CD8-positive, alpha-beta T cell (primary cell): ENCODE measurements at regions of chr6 and their contacts with region 1.

Region 1: GRCh38 chr6:127186889-127187288 is 68.4 kb downstream of the RSPO3 start:
- DNase-seq: peak; percentile 16 to 53 (median 35)
- ATAC-seq: no peak
- H3K4me3 ChIP-seq: no peak overlapping the region
- H3K4me3 Mint-ChIP-seq: no peak overlapping the region
- H3K27ac ChIP-seq: no peak overlapping the region
- H3K27ac Mint-ChIP-seq: no peak overlapping the region
- H3K4me1 ChIP-seq: no peaks in the 10 kb centered on the region
- H3K4me1 Mint-ChIP-seq: no peaks in the 10 kb centered on the region
- H3K27me3 ChIP-seq: no peaks in the 10 kb centered on the region
- H3K27me3 Mint-ChIP-seq: peaks cover 7% of the 10 kb centered on the region
- CTCF ChIP-seq: no peak

Region 2: DNA sequence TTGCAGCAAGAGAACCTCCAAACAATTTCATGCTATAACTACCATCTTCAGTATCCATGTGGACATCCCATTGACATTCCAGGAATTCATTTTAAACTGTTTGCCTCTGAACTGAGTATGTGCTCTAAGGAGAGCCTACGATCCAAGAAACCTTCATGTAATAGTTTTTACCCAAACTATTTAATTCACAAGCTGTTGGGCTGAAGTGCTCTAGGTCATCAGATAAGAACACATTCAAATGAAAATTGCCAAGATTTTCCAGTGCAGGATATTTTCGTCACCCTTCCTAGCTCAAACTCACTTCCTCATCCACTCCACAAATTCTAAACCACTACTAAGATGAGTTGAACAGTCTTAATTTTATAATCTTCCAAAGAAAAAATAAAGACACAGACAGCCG is 55.6 kb before region 1 on chr6:
- CTCF ChIA-PET with region 1: no interaction called
- POLR2A ChIA-PET with region 1: no interaction called
- intact Hi-C with region 1: no loop called
- DNase-seq: no peak
- ATAC-seq: no peak
- H3K4me3 ChIP-seq: no peak overlapping the region
- H3K4me3 Mint-ChIP-seq: no peak overlapping the region
- H3K27ac ChIP-seq: no peak overlapping the region
- H3K27ac Mint-ChIP-seq: no peak overlapping the region
- H3K4me1 ChIP-seq: no peaks in the 10 kb centered on the region
- H3K4me1 Mint-ChIP-seq: no peaks in the 10 kb centered on the region
- H3K27me3 ChIP-seq: no peaks in the 10 kb centered on the region
- H3K27me3 Mint-ChIP-seq: peaks cover 7% of the 10 kb centered on the region
- CTCF ChIP-seq: no peak

Region 3: DNA sequence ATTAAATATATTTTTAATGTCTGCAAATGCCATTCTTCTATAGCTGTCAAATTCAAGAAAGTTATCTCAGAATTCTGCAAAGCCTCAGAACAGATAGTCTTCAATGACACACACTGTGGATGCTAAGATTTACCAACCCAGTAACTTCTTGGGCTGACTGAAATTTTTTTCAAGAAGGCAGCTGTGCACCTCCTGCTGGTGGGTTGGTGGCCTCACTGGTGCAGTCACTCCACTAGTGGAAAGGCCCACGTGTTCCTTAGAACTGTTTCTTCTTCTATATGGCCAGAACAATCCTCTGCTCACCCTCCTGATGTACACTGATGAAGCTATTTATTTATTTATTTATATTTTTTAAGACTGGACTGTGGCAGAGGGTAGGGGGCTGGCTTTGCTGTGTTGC is 360.3 kb after region 1 on chr6:
- CTCF ChIA-PET with region 1: no interaction called
- POLR2A ChIA-PET with region 1: no interaction called
- intact Hi-C with region 1: loop called in 1 of 2 experiments (anchors 10 kb)
- DNase-seq: peak in 3 of 9 experiments; percentile 7 to 23 (median 19)
- ATAC-seq: no peak
- H3K4me3 ChIP-seq: no peak overlapping the region
- H3K4me3 Mint-ChIP-seq: no peak overlapping the region
- H3K27ac ChIP-seq: no peak overlapping the region
- H3K27ac Mint-ChIP-seq: no peak overlapping the region
- H3K4me1 ChIP-seq: no peaks in the 10 kb centered on the region
- H3K4me1 Mint-ChIP-seq: no peaks in the 10 kb centered on the region
- H3K27me3 ChIP-seq: no peaks in the 10 kb centered on the region
- H3K27me3 Mint-ChIP-seq: peaks cover 21% of the 10 kb centered on the region
- CTCF ChIP-seq: no peak

Region 4: DNA sequence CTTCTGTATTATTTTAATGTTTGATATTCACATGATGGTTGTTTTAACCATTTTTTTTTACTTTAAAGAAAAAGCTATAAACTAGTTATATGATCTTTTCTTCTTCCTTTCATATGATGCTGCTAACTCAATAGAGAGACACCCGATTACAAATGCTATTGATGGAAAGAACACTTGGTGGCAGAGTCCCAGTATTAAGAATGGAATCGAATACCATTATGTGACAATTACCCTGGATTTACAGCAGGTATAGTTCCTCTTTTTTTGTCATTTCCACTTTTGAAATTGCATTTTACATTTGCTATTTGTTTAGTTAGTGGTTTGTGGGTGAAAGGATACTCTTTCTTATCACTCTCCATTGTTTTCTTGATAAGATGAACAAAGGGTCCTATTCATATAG is 1872.8 kb after region 1 on chr6:
- CTCF ChIA-PET with region 1: no interaction called
- POLR2A ChIA-PET with region 1: no interaction called
- intact Hi-C with region 1: loop called in 1 of 2 experiments (anchors 5 kb)
- DNase-seq: no peak
- ATAC-seq: no peak
- H3K4me3 ChIP-seq: no peak overlapping the region
- H3K4me3 Mint-ChIP-seq: no peak overlapping the region
- H3K27ac ChIP-seq: no peak overlapping the region
- H3K27ac Mint-ChIP-seq: no peak overlapping the region
- H3K4me1 ChIP-seq: no peaks in the 10 kb centered on the region
- H3K4me1 Mint-ChIP-seq: no peaks in the 10 kb centered on the region
- H3K27me3 ChIP-seq: peaks cover 0 to 5% of the 10 kb centered on the region in 2 experiments
- H3K27me3 Mint-ChIP-seq: no peaks in the 10 kb centered on the region
- CTCF ChIP-seq: no peak